A673 (cell line): ENCODE measurements at regions of chr17 and their contacts with region 1.

Region 1: DNA sequence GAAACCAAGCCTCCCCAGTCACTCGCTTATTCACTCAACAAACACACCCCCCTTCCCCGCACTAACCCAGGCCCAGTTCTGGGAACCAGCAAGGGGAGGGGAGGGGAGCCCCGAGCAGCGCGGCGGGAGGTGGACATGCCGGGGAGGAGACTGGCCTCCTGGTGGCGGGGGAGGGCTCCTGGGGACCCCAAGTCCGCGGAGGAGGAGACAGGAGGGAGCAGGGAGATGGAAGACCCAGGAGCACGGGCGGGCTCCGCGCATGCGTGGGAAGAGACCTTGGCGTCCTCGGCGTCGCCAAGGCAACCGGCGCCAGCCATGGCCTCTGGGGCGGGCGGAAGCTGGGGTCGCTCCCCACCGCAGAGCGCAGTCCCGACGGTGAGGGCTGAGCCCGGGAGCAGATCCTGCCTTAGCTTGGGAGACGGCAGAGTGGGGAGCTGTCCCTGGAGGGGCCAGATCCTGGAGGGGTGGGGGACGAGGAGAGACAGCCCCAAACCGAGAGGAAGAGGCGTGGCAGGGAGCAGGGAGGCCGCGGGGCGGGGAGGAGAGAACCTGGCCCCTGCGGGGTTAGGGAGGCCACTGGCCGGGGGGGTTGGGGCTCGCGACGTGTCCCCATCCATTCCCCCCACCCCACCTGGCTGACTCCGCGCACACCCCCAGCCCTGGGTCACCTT is at the start of gene PRR29:
- DNase-seq: peak; percentile 85
- H3K4me3 ChIP-seq: peak within 1 kb of the TSS; percentile 59
- H3K27ac ChIP-seq: no peak within 1 kb of the TSS
- H3K4me1 ChIP-seq: no peaks in the 10 kb centered on the region
- H3K27me3 ChIP-seq: no peaks in the 10 kb centered on the region
- CTCF ChIP-seq: no peak
- total RNA-seq, gene PRR29: 0.37 TPM in 1 of 2 replicates, not detected in the other

Region 2: DNA sequence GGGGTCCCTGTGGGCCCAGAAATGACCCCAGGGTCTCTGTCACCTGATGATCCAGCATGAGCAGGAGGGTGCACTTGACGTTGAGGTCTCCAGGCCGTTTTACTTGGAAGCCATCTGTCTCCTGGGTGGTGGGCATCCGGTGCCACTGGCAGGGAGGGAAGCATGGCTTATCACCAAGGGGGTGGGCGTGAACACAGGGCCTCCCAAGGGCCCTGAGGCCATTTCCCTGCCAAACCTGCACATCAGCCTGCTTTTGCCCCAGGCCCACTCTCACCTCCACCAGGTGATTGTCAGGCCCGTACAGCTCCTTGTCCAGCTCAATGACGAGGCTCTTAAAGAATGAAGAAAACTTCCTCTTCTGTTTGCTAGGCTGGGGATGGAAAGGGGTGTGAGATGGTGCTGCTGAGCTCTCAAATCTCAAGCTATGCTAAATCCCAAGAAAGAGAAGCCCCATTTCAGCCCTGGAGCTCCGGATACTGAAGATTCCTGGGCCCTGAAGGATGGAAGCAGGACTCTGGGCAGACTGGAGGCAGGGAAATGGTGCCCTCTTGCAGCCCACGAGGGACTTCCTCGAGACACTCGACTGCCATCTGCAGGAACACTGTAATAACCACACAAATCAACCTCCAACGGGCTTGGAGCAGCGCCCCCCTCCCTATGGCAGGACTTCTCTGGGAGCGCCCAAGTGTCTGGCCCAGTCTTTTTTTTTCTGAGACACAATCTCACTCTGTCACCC is 163.6 kb before region 1 on chr17:
- CTCF ChIA-PET with region 1: no interaction called
- POLR2A ChIA-PET with region 1: no interaction called
- intact Hi-C with region 1: no loop called
- DNase-seq: peak; percentile 95
- H3K4me3 ChIP-seq: no peak overlapping the region
- H3K27ac ChIP-seq: no peak overlapping the region
- H3K4me1 ChIP-seq: peaks cover 31% of the 10 kb centered on the region
- H3K27me3 ChIP-seq: no peaks in the 10 kb centered on the region
- CTCF ChIP-seq: peak; percentile 93

Region 3: GRCh38 chr17:64056269-64057005 is 58.3 kb after region 1 on chr17:
- CTCF ChIA-PET with region 1: no interaction called
- POLR2A ChIA-PET with region 1: no interaction called
- intact Hi-C with region 1: no loop called
- DNase-seq: no peak
- H3K4me3 ChIP-seq: no peak overlapping the region
- H3K27ac ChIP-seq: no peak overlapping the region
- H3K4me1 ChIP-seq: no peaks in the 10 kb centered on the region
- H3K27me3 ChIP-seq: no peaks in the 10 kb centered on the region
- CTCF ChIP-seq: no peak

Region 4: GRCh38 chr17:64171041-64171440 is 172.9 kb after region 1 on chr17:
- CTCF ChIA-PET with region 1: no interaction called
- POLR2A ChIA-PET with region 1: interaction called, 12 read pairs
- intact Hi-C with region 1: no loop called
- DNase-seq: no peak
- H3K4me3 ChIP-seq: no peak overlapping the region
- H3K27ac ChIP-seq: no peak overlapping the region
- H3K4me1 ChIP-seq: no peaks in the 10 kb centered on the region
- H3K27me3 ChIP-seq: no peaks in the 10 kb centered on the region
- CTCF ChIP-seq: no peak

Region 5: DNA sequence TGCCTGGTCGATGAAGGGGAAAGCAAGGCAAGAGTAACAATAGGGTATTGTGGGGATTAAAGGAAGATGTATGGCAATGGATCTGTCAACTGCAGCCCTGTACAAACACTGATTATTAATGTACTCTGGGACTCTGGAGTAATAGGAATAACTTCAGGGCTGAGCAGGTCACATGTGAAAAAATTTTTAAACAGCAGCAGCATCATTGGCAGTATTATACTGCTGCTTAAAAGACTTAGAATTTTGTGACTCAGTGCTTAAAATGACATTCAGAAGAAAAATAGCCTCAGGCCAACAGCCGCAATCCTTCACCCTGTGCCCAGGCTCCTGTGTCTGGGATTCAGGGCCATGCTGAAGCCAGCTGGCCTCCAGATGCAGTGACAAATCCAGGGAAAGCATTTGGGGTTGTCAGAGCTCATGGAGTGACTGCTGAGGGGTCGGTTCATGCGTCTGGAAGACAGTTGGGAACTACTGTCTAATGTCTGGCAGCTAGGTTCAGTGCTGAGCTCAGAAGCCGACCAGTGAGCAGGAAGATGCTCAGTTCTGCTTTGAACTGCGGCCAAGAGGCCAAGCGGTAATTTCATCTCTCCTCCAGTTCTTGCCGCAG is 242.7 kb after region 1 on chr17:
- CTCF ChIA-PET with region 1: no interaction called
- POLR2A ChIA-PET with region 1: no interaction called
- intact Hi-C with region 1: no loop called
- DNase-seq: no peak
- H3K4me3 ChIP-seq: no peak overlapping the region
- H3K27ac ChIP-seq: no peak overlapping the region
- H3K4me1 ChIP-seq: peaks cover 7% of the 10 kb centered on the region
- H3K27me3 ChIP-seq: no peaks in the 10 kb centered on the region
- CTCF ChIP-seq: no peak